Caco-2 (cell line): ENCODE measurements at regions of chr17 and their contacts with region 1.

Region 1: GRCh38 chr17:45021607-45022287 is 29.7 kb downstream of the DCAKD start:
- DNase-seq: peak; percentile 72 to 89
- H3K4me3 ChIP-seq: peak overlapping the region; percentile 57
- H3K4me3 Mint-ChIP-seq: peak overlapping the region; percentile 70
- H3K27ac Mint-ChIP-seq: no peak overlapping the region
- H3K4me1 ChIP-seq: peaks cover 18% of the 10 kb centered on the region
- H3K4me1 Mint-ChIP-seq: peaks cover 17% of the 10 kb centered on the region
- H3K27me3 ChIP-seq: no peaks in the 10 kb centered on the region
- H3K27me3 Mint-ChIP-seq: peaks cover 6% of the 10 kb centered on the region
- CTCF ChIP-seq: peak; percentile 62 to 92

Region 2: DNA sequence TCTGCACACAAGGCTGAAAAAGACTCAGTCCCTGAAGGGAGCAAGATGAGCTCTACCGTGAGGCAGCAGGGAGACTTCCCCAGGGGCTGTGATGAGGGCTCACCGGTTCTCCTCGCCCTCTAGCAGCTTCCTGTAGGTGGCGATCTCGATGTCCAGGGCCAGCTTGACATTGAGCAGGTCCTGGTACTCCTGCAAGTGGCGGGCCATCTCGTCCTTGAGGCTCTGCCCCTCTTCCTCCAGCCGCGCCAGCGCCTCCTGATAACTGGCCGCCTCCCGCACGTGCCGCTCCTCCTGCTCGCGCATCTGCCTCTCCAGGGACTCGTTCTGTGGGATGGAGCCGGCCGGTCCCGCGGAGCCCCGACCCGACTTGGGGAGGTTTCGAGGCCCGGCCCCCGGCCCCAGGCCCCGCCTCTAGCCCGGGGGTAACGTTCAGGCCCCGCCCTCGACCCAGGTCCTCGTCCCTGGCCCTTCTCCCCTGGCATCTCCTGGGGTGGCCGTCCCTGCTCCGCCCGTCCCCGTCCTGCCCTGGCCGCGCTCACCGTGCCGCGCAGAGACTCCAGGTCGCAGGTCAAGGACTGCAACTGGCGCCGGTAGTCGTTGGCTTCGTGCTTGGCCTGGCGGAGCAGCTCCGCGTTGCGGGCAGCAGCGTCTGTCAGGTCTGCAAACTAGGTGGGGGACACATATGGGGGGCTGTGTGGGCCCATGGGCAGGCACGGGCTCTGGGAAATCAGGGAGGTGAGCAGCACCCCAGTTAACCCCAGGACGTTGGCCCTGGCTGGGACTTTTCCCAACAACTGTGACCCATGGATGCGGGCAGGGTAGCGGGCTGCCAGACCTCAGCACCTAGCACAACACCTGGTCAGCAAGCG is 110.4 kb before region 1 on chr17:
- CTCF ChIA-PET with region 1: interaction called, 12 read pairs
- POLR2A ChIA-PET with region 1: no interaction called
- intact Hi-C with region 1: no loop called
- DNase-seq: peak; percentile 72 to 78
- H3K4me3 ChIP-seq: no peak overlapping the region
- H3K4me3 Mint-ChIP-seq: no peak overlapping the region
- H3K27ac Mint-ChIP-seq: no peak overlapping the region
- H3K4me1 ChIP-seq: peaks cover 5% of the 10 kb centered on the region; the same call in 1 of the 2 replicates
- H3K4me1 Mint-ChIP-seq: peaks cover 10% of the 10 kb centered on the region
- H3K27me3 ChIP-seq: no peaks in the 10 kb centered on the region
- H3K27me3 Mint-ChIP-seq: peaks cover 6% of the 10 kb centered on the region
- CTCF ChIP-seq: peak in 1 of 2 experiments; percentile 53

Region 3: DNA sequence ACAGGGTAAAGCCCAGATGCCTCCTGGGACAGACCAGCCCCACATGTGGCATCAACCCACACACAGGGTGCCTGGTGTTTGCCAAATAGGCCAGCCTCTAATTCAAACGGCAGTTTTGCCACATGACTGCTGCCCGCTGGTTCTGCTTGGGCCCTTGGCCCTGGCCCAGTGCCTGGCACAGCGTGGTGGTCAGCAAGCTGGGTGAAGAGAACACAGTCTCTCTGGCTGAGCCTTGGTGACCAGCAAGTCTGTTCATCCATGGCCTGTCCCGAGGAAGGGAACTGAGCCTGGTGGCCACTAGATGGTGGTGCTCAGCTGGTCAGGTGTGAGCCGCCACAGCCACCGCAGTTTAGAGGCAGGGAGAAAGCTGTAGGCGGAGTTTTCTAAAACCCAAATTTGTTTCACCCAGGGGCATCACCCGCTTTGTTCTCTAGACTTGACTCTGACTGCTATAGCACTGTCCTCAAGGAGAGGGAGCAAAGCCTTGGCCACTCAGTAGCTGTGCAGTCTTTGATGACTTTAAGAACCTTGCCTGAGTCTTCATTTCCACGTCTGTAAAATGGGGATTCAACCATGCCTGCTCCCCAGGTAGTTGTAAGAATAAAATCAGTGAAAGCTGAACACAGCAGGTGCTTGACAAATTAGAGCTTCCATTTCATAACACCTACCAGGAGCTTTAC is 101.7 kb before region 1 on chr17:
- CTCF ChIA-PET with region 1: interaction called, 78 read pairs
- POLR2A ChIA-PET with region 1: interaction called, 3 read pairs
- intact Hi-C with region 1: loop called (anchors 1 kb)
- DNase-seq: peak; percentile 84 to 86
- H3K4me3 ChIP-seq: no peak overlapping the region
- H3K4me3 Mint-ChIP-seq: no peak overlapping the region
- H3K27ac Mint-ChIP-seq: no peak overlapping the region
- H3K4me1 ChIP-seq: peaks cover 6% of the 10 kb centered on the region; the same call in 1 of the 2 replicates
- H3K4me1 Mint-ChIP-seq: no peaks in the 10 kb centered on the region
- H3K27me3 ChIP-seq: no peaks in the 10 kb centered on the region
- H3K27me3 Mint-ChIP-seq: peaks cover 6% of the 10 kb centered on the region
- CTCF ChIP-seq: peak; percentile 77 to 89

Region 4: GRCh38 chr17:44947461-44948314 is 74.1 kb before region 1 on chr17 and contains the start of gene KIF18B:
- CTCF ChIA-PET with region 1: no interaction called
- POLR2A ChIA-PET with region 1: interaction called, 5 read pairs
- intact Hi-C with region 1: loop called (anchors 2 kb)
- DNase-seq: peak; percentile 95 to 96
- H3K4me3 ChIP-seq: peak within 1 kb of the TSS; percentile 79
- H3K4me3 Mint-ChIP-seq: peak within 1 kb of the TSS; percentile 90
- H3K27ac Mint-ChIP-seq: peak within 1 kb of the TSS; percentile 92
- H3K4me1 ChIP-seq: peaks cover 8% of the 10 kb centered on the region
- H3K4me1 Mint-ChIP-seq: peaks cover 8% of the 10 kb centered on the region
- H3K27me3 ChIP-seq: no peaks in the 10 kb centered on the region
- H3K27me3 Mint-ChIP-seq: no peaks in the 10 kb centered on the region
- CTCF ChIP-seq: no peak
- total RNA-seq, gene KIF18B: 63.6 and 68.4 TPM in 2 replicates

Region 5: DNA sequence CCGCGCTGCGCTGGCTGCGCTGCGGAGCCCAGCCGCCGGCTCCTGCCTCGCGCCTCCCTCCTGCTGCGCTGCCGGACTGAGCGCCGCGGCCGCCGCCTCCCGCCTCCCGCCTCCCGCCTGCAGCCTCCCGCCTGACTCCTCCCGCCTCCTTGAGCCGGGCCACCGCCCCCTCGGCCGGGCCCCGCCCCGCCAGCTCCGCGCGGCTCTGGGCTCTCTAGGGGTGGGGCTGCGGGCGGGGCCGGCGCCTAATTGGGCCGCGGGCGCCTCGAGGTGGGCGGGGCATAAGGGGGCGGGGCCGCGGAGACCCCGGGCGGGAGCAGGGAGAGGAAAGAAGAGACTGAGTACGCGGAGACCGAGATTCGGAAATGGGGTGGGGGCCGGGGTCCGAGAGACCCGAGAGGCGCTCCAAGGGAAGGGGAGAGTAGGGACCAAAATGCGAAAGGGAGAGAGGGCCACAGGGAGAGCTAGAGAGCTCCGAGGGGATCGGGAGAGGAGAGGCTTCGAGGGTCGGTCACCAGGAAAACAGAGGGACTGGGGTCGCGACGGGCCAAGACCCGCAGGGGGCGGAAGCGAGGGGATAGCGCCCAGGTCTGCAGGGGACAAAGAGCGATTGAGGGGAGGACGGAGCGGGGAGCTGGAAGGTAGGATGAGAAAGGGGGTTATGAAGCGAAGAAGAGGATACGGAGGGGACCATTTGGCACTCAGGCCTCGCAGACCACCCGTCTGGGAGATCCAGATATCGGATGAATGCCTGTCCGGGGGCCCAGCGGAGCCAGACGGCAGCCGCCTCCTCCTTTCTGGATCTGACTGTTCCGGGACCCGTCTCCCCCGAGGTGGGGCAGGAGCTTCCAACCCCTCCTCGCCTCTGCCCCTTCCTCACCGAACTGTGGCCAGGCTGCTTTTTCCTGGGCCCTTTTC is 53.3 kb before region 1 on chr17 and contains the start of gene C1QL1:
- CTCF ChIA-PET with region 1: interaction called, 10 read pairs
- POLR2A ChIA-PET with region 1: no interaction called
- intact Hi-C with region 1: loop called (anchors 2 kb)
- DNase-seq: peak; percentile 93 to 96
- H3K4me3 ChIP-seq: peak within 1 kb of the TSS; percentile 52
- H3K4me3 Mint-ChIP-seq: peak within 1 kb of the TSS; percentile 77
- H3K27ac Mint-ChIP-seq: no peak within 1 kb of the TSS
- H3K4me1 ChIP-seq: peaks cover 6% of the 10 kb centered on the region
- H3K4me1 Mint-ChIP-seq: no peaks in the 10 kb centered on the region
- H3K27me3 ChIP-seq: peaks cover 1% of the 10 kb centered on the region; the same call in 1 of the 2 replicates
- H3K27me3 Mint-ChIP-seq: peaks cover 15% of the 10 kb centered on the region
- CTCF ChIP-seq: peak; percentile 30 to 63
- total RNA-seq, gene C1QL1: 2.5 and 5.2 TPM in 2 replicates